Pancreas (tissue), 10 donors: ENCODE measurements at regions of chr2 and their contacts with region 1.

Region 1: GRCh38 chr2:113248997-113249770 is 29.5 kb downstream of the PAX8 start:
- DNase-seq: peak; percentile 61 to 85 (median 80)
- ATAC-seq: peak; percentile 84 to 97 (median 92)
- H3K4me3 ChIP-seq: no peak overlapping the region
- H3K27ac ChIP-seq: no peak overlapping the region
- H3K4me1 ChIP-seq: peaks cover 0 to 3% (median 0%) of the 10 kb centered on the region in 3 donors
- H3K27me3 ChIP-seq: no peaks in the 10 kb centered on the region
- CTCF ChIP-seq: peak; percentile 78 to 92 (median 88)

Region 2: DNA sequence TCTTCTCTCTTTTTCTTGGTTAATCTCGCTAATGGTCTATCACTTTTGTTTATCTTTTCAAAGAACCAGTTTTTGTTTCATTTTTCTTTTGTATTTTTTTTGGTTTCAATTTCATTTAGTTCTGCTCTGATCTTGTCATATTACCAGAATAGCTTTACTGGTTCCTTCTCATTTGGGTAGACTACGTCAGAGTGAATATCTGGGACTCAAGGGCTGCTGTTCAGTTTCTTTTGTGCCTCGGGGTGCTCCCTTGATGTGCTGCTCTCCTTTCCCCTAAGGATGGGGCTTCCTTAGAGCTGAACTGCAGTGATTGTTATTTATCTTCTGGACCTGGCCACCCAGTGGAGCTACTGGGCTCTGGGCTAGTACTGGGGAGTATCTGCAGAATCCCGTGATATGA is 151.1 kb before region 1 on chr2:
- intact Hi-C with region 1: no loop called
- DNase-seq: no peak
- ATAC-seq: no peak
- H3K4me3 ChIP-seq: no peak overlapping the region
- H3K27ac ChIP-seq: no peak overlapping the region
- H3K4me1 ChIP-seq: no peaks in the 10 kb centered on the region
- H3K27me3 ChIP-seq: no peaks in the 10 kb centered on the region
- CTCF ChIP-seq: no peak

Region 3: GRCh38 chr2:113337809-113338208 is 88.6 kb after region 1 on chr2:
- intact Hi-C with region 1: no loop called
- DNase-seq: no peak
- ATAC-seq: no peak
- H3K4me3 ChIP-seq: no peak overlapping the region
- H3K27ac ChIP-seq: no peak overlapping the region
- H3K4me1 ChIP-seq: no peaks in the 10 kb centered on the region
- H3K27me3 ChIP-seq: no peaks in the 10 kb centered on the region
- CTCF ChIP-seq: no peak

Region 4: DNA sequence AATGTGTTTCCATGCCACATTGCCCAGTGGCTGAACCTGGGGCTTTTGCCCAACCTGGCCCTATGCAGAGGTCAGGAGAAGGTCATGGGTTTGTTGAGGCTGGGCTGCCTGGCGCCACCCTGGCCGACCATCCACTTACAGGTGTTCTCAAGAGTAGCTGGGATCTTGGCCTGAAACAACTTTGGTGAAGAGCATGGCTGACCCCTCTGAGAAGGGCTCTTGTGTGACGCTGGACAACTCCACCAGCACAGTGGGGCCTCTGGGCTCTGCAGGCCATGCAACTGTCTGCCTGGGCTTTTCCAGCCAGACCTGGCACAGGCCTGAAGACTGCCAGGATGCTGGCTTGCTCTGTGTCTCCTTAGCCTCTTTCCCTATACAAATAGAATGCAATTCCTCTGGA is 111.9 kb after region 1 on chr2:
- intact Hi-C with region 1: loop called in 2 of 3 experiments (anchors 10 kb)
- DNase-seq: no peak
- ATAC-seq: no peak
- H3K4me3 ChIP-seq: no peak overlapping the region
- H3K27ac ChIP-seq: no peak overlapping the region
- H3K4me1 ChIP-seq: no peaks in the 10 kb centered on the region
- H3K27me3 ChIP-seq: no peaks in the 10 kb centered on the region
- CTCF ChIP-seq: no peak